ENCODE measurements at regions of chr7 and their contacts with region 1.

Region 1: DNA sequence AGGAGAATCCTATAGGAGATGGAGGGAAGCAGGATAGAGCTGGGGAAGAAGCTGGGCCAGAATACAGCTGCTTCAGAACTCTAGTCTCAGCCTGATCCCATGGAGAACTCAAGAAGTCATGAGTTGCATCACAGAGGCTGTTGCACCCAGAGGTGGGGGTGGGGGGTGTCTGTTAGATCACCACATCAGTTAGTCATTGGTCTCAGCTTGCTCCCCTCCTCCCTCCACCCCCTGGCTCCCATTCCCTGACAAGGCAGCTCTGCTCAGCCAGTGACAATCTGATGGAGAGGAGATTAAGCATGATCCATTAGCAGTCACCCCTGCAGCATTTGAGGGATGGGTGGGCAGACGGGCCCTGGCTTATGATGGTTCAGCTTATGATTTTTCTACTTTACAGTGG is 58.4 kb upstream of the FGL2 start:
- DNase-seq: peak; percentile 11
- H3K4me3 Mint-ChIP-seq: no peak overlapping the region
- H3K27ac Mint-ChIP-seq: no peak overlapping the region
- H3K4me1 Mint-ChIP-seq: no peaks in the 10 kb centered on the region
- H3K27me3 Mint-ChIP-seq: no peaks in the 10 kb centered on the region
- CTCF ChIP-seq: no peak

Region 2: GRCh38 chr7:77247206-77247850 is 10.7 kb before region 1 on chr7:
- CTCF ChIA-PET with region 1: interaction called, 12 read pairs
- POLR2A ChIA-PET with region 1: no interaction called
- intact Hi-C with region 1: no loop called
- DNase-seq: peak; percentile 74
- H3K4me3 Mint-ChIP-seq: no peak overlapping the region
- H3K27ac Mint-ChIP-seq: no peak overlapping the region
- H3K4me1 Mint-ChIP-seq: no peaks in the 10 kb centered on the region
- H3K27me3 Mint-ChIP-seq: no peaks in the 10 kb centered on the region
- CTCF ChIP-seq: peak; percentile 79

Region 3: DNA sequence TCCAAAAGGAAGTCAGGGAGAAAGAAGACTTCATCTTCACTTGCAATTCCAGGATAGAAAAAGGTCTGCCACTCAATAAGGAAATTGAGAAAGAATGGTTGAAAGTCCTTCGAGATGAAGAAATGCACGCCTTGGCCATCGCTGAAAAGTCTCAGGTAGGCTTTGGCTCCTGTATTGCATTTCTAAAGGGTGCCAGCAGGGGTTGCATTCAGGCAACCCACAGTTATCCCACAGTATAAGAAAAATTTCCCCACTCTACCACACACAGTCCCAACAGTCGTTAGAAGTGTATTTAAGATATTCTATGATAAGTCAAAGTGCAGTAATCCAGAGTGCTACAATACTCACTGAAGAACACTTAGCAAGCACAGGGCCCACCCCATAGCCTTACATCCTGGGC is 35.0 kb after region 1 on chr7:
- CTCF ChIA-PET with region 1: no interaction called
- POLR2A ChIA-PET with region 1: no interaction called
- intact Hi-C with region 1: no loop called
- DNase-seq: peak; percentile 4
- H3K4me3 Mint-ChIP-seq: no peak overlapping the region
- H3K27ac Mint-ChIP-seq: no peak overlapping the region
- H3K4me1 Mint-ChIP-seq: peaks cover 6% of the 10 kb centered on the region
- H3K27me3 Mint-ChIP-seq: no peaks in the 10 kb centered on the region
- CTCF ChIP-seq: no peak

Measured in MCF 10A (cell line).